ENCODE measurements at regions of chr5 and their contacts with region 1.

Region 1: DNA sequence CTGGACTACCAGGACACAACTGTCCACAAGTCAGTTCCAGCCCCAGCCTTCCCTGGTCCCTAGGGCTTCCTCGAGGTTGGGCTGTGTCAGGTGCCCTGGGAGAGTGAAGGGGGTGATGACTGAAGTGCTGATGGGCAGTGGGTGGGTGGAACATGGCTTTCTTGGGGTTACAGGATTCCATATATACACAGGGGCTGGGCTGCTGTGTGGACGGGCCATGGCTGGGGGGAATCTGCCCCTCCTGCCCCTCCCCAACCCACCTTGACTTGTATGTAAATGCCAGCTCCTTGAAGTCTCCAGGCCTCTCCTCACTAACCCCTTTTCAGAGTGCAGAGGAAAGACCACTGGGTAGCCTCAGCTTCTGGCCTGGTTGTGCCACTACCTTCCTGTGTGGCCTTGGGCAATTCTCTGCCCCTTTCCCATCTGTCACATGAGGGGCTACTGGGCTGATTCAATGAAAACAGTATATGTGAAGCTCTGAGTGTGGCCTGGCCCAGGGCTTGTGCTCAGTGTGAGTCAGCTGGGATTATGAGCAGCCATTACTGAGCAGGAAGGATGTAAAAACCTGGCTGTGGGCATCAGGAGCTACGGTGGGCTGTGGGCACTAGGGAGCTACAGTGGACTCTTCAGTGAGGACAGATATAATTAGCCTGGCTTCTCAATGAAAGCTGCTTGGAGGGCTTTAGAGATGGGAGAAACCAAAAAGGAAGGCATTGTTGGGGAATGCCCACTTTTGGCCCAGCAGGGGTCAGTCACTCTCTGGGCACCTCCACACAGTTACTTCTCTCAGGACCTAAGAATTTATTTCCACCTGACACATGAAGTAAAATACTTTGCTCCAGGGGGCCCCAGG is 23.3 kb downstream of the PITX1 start:
- DNase-seq: no peak
- H3K4me3 ChIP-seq: no peak overlapping the region
- H3K27ac ChIP-seq: no peak overlapping the region
- H3K4me1 ChIP-seq: no peaks in the 10 kb centered on the region
- CTCF ChIP-seq: 0 out of 2 replicates have a peak, but pooled peaks have one; percentile 33

Region 2: DNA sequence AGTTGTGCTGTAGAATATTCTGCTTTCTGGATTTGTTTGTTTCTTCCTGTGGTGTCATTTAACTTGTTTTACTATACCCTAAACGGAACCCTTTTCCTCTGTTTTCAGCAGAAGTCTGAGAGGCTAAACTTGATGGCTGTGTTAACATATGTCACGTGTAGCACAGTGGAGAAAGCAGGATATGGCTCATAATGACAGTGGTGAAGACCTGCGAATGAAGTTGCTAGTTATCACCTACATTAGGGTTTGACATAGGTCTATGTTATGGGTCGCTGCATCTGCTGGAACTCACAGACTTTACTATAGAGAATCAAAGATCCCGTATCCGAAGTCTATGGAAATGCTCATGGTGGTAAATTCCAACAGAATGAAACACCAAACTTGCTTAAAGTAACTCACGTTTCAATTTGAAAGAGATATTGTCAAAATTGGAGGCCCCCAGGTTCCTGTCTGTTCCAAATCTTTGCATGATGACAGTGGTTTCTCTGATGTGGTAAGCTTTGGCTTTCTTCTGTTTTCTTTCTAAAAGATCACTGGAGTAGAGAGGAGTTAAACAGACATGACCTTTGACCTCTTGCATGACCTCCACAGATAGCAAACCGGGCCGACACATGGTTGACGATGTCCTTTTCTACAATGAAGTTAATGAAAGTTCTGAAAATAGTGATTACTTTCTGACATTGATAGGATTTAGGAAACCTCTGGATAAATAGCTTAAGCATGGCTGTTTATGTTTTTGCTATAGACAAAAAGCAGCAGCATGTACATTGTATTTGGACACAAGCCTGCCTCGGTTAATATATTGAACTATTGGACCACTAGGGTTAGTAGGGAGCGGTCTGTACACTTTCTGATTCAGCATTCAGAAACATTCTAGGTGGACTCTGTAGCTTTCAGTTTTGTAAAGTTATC is 46.1 kb before region 1 on chr5:
- CTCF ChIA-PET with region 1: no interaction called
- POLR2A ChIA-PET with region 1: no interaction called
- intact Hi-C with region 1: no loop called
- DNase-seq: no peak
- H3K4me3 ChIP-seq: no peak overlapping the region
- H3K27ac ChIP-seq: no peak overlapping the region
- H3K4me1 ChIP-seq: no peaks in the 10 kb centered on the region
- CTCF ChIP-seq: no peak

Region 3: DNA sequence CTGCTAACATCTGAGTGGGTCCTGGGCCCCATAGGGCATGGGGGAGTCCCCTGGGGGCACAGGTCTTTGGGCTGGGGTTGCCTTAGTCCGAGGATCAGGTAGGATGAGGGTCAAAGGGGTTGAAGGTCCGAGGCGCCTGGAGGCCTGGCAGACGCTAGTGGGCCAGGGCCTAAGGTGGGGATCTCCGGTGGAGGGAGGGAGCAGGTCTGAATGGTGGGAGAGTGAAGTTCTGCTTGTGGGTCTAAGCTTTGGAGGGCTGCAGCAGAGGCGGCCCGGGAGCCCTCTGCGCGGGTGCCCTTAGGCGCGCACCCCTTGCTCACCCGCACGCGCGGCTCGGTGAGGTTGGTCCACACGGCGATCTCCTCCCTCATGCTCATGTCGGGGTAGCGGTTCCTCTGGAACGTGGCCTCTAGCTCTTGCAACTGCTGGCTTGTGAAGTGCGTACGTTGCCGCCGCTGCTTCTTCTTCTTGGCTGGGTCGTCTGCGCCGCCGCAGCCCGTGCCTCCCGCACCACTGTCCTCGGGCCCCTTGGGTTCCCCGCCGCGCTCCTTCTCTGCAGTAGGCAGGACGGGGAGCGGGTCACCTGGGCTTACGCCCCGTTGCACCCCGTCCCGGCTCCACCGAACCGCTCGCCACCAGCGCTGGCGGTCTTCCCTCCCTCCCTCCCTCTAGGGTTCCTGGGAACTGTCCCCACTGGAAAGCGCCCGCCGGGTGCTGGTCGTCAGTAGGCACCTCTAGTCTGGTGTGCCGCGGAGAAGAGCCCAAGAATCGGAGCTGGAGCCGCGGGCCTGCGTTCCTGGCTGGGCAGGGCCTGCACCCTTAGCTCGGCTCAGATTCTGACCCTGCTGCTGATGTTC is 20.5 kb after region 1 on chr5:
- CTCF ChIA-PET with region 1: no interaction called
- POLR2A ChIA-PET with region 1: no interaction called
- intact Hi-C with region 1: no loop called
- DNase-seq: no peak
- H3K4me3 ChIP-seq: peak overlapping the region; percentile 84
- H3K27ac ChIP-seq: peak overlapping the region; percentile 66
- H3K4me1 ChIP-seq: peaks cover 42% of the 10 kb centered on the region
- CTCF ChIP-seq: no peak

Region 4: GRCh38 chr5:135054546-135054945 is 43.8 kb after region 1 on chr5:
- CTCF ChIA-PET with region 1: no interaction called
- POLR2A ChIA-PET with region 1: no interaction called
- intact Hi-C with region 1: no loop called
- DNase-seq: no peak
- H3K4me3 ChIP-seq: peak overlapping the region; percentile 61
- H3K27ac ChIP-seq: peak overlapping the region; percentile 97
- H3K4me1 ChIP-seq: peaks cover 97% of the 10 kb centered on the region
- CTCF ChIP-seq: no peak

Region 5: DNA sequence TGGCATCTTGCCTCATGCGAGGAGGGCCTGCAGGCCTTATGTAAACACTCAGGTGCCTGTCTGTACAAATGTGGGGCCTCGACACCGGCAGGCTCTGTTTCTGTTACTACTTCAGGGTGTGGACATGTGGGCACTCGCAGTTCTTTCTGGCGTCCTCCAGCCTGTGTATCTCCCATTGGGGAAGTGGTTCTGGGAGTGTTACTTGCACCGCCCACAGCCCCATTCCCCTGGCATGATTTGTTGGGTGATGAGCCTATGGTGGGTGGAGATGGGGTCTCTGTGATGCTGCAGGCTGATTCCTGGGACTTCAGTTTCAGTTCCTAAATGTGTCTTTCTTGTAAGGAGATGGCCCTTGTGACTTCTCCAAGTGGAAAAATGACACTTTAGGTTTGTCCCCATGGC is 105.4 kb after region 1 on chr5:
- CTCF ChIA-PET with region 1: interaction called, 13 read pairs
- POLR2A ChIA-PET with region 1: no interaction called
- intact Hi-C with region 1: no loop called
- DNase-seq: no peak
- H3K4me3 ChIP-seq: no peak overlapping the region
- H3K27ac ChIP-seq: no peak overlapping the region
- H3K4me1 ChIP-seq: peaks cover 15% of the 10 kb centered on the region
- CTCF ChIP-seq: no peak

Measured in OCI-LY7 (cell line).